ENCODE measurements at regions of chr1 and their contacts with region 1.

Region 1: GRCh38 chr1:161956097-161956496 is 67.6 kb downstream of the OLFML2B start:
- DNase-seq: peak in 1 of 5 donors; percentile 31
- ATAC-seq: peak in 3 of 4 donors; percentile 18 to 72 (median 61)
- H3K4me3 ChIP-seq: no peak overlapping the region
- H3K27ac ChIP-seq: no peak overlapping the region
- H3K4me1 ChIP-seq: peaks cover 0 to 43% (median under 1%) of the 10 kb centered on the region in 12 donors
- H3K27me3 ChIP-seq: no peaks in the 10 kb centered on the region
- CTCF ChIP-seq: no peak
- POLR2A ChIP-seq: no peak

Region 2: DNA sequence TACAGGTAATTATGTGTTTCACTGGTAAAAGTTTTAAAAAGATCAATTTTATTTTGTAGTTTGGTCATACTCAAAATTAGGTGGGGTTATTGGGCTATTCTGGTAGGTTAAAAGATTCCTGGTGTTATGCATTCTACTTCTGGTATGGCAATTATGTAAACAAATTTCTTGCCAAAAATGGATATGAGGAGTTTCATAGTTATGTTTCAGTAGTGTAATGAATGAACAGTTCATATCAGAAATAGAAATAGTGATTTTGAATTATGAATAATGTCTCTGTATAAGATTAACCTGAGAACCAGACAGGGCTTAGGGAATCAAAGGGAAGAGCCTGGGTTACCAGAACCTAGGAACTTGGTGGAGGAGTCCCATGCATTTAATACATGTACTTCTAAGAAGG is 174.1 kb before region 1 on chr1:
- intact Hi-C with region 1: no loop called
- DNase-seq: no peak
- ATAC-seq: no peak
- H3K4me3 ChIP-seq: no peak overlapping the region
- H3K27ac ChIP-seq: no peak overlapping the region
- H3K4me1 ChIP-seq: peaks cover 0 to 16% (median 0%) of the 10 kb centered on the region in 12 donors
- H3K27me3 ChIP-seq: no peaks in the 10 kb centered on the region
- CTCF ChIP-seq: no peak
- POLR2A ChIP-seq: no peak

Region 3: DNA sequence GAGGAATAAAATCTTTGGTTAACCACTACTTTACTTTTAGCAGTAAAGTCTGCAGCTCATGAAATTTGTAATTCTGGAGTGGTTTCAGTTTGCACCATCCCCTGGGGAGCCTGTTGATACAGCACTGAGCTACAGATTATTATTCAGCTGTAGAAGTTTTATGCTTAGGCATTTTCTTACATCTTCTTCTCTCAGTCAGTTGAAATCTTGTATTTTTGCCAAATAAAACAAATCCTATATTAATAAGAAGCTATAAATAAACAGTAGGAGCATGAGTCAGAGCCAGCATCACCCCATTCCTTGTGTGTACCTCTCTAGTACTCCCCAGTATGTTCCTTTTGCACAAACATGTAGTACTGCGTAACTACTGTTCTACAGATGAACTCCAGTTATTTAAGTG is 71.1 kb before region 1 on chr1:
- intact Hi-C with region 1: loop called in 1 of 10 experiments (anchors 10 kb)
- DNase-seq: peak in 4 of 5 donors; percentile 23 to 40 (median 30)
- ATAC-seq: peak in 2 of 4 donors; percentile 44 to 65
- H3K4me3 ChIP-seq: peak overlapping the region in 6 of 12 donors; percentile 0 to 34 (median 10)
- H3K27ac ChIP-seq: peak overlapping the region in 4 of 12 donors; percentile 4 to 30 (median 28)
- H3K4me1 ChIP-seq: peaks cover 0 to 9% (median 0%) of the 10 kb centered on the region in 12 donors
- H3K27me3 ChIP-seq: no peaks in the 10 kb centered on the region
- CTCF ChIP-seq: no peak
- POLR2A ChIP-seq: no peak

Region 4: GRCh38 chr1:161921990-161922389 is 34.1 kb before region 1 on chr1:
- intact Hi-C with region 1: loop called in 1 of 10 experiments (anchors 5 kb)
- DNase-seq: no peak
- ATAC-seq: no peak
- H3K4me3 ChIP-seq: no peak overlapping the region
- H3K27ac ChIP-seq: no peak overlapping the region
- H3K4me1 ChIP-seq: peaks cover 0 to 5% (median 0%) of the 10 kb centered on the region in 12 donors
- H3K27me3 ChIP-seq: no peaks in the 10 kb centered on the region
- CTCF ChIP-seq: no peak
- POLR2A ChIP-seq: no peak

Measured in heart left ventricle (tissue), 16 donors.